Heart left ventricle (tissue), 16 donors: ENCODE measurements at regions of chr12 and their contacts with region 1.

Region 1: DNA sequence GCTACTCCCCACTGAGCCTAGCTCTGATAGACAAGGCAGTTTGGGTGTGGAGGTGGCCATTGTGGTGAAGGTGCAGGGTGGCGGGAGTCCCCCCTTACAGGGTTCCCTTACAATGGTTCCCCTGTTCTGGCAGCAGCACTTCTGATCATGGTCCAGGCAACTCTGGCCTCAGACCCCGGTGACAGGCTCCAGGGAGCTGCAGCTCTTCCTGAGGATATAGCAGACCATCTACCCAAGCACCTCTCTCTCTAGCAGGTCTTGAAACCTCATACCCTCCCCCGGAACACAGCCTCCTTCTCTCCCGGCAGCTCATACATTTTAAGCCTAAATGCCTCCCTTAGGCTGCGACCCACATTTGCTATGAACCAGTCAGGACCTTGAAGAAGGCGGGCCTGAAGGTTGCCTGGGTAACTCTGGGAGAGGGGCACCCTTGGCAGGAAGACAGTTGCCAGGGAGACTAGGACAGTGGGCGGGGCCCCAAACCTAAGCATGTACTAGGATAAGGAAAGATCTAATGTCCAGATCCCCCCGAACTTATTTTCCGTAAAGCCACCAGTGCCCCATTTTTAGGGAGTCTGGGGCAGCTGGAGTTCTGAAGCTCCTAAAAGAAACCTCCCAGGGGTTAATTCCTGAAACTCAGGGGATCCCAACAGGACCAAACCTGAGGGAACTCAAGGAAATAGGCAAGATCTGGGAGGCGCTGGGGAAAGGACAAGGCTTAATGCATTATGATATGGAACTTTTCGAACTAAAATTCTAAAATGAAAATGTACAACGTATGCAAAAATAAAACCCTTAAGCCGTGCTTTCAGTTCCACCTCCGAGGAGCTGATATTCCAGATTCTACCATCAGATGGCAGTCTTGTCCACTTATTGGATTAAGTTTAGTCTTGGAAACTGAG is 4.5 kb upstream of the GDF11 start:
- DNase-seq: peak; percentile 77 to 88 (median 82)
- ATAC-seq: peak; percentile 70 to 74 (median 72)
- H3K4me3 ChIP-seq: peak overlapping the region in 11 of 12 donors; percentile 37 to 68 (median 57)
- H3K27ac ChIP-seq: peak overlapping the region in 11 of 12 donors; percentile 38 to 79 (median 63)
- H3K4me1 ChIP-seq: peaks cover 0 to 27% (median 16%) of the 10 kb centered on the region in 12 donors
- H3K27me3 ChIP-seq: no peaks in the 10 kb centered on the region
- CTCF ChIP-seq: peak; percentile 78 to 91 (median 86)
- POLR2A ChIP-seq: no peak

Region 2: DNA sequence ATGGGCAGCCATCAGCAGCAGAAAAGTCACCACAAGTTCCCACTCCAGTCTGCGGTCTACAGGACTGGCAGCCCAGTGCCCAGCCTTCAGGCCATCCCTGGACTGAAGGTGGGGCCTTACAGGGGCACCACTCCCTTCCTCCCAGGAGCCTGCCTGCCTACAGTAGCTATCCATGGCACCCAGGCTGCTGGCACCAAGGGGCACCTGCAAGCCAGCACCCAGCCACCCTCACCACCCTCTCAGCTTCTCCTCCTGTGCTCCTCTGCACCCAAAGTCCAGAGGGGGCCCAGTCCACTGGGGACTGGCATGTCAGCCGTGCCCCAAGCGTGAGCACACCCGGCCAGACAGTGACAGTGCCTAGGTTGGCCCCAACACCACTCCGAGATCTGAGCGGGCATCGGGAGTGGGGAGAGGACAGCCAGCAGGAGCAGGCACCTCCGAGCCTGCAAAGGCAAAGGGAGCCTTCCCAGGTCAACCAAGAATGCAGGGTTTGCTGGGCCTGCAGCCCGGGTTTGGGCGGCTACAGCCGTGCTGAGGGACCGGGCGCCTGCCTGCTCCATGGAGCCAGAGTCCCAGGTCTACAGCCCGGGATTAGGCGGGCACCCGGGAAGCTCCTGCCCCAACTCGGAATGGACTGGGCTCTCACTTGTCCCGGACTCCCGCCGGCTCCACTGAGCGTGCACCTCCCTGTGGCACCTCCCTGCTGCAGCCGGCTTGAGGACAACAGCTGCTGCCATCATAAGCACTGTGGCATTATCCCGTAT is 346.2 kb before region 1 on chr12:
- intact Hi-C with region 1: no loop called
- DNase-seq: no peak
- ATAC-seq: no peak
- H3K4me3 ChIP-seq: no peak overlapping the region
- H3K27ac ChIP-seq: no peak overlapping the region
- H3K4me1 ChIP-seq: no peaks in the 10 kb centered on the region
- H3K27me3 ChIP-seq: peaks cover 0 to 6% (median 0%) of the 10 kb centered on the region in 9 donors
- CTCF ChIP-seq: no peak
- POLR2A ChIP-seq: no peak

Region 3: DNA sequence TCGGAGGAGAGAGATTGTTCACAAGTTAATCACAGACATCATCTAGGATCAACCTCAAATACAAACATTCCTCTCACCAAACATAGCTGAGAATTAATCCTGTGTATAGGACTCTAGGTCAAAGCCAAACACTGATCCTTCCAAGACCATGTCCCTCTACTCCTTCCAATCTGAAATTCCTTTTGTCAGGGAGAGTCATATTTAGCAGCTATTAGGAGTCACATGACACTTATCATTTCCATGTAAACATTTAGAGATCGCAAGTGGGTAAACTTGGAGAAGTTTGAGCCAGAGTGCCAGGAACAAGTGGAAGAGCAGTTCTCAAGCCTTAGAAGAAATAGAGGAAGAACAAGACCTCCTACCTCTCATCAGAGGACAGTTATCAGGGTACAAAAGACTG is 152.6 kb before region 1 on chr12:
- intact Hi-C with region 1: no loop called
- DNase-seq: no peak
- ATAC-seq: no peak
- H3K4me3 ChIP-seq: no peak overlapping the region
- H3K27ac ChIP-seq: no peak overlapping the region
- H3K4me1 ChIP-seq: no peaks in the 10 kb centered on the region
- H3K27me3 ChIP-seq: no peaks in the 10 kb centered on the region
- CTCF ChIP-seq: no peak
- POLR2A ChIP-seq: no peak

Region 4: DNA sequence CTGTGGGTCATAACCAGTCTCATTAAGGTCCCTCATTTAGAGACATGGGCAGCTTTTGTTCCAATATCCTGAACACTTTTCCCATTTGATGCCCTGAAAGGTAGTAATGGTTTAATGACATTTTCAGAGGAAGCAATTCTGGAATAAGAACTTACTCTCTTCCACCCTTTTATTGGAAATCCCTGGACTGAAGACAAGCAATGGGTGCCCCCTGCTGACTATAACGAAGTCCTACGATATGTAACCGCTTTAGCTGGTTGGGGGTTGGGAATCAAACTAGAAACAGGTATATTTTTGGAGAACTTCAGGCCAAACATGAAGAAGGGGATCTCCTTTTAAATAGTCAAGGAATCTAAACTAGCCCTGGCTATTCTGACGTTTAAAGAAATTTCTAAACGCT is 58.7 kb after region 1 on chr12:
- intact Hi-C with region 1: loop called in 9 of 10 experiments (anchors 2 to 5 kb)
- DNase-seq: peak in 1 of 5 donors; percentile 18
- ATAC-seq: peak in 2 of 4 donors; percentile 52 to 60
- H3K4me3 ChIP-seq: no peak overlapping the region
- H3K27ac ChIP-seq: no peak overlapping the region
- H3K4me1 ChIP-seq: peaks cover 0 to 7% (median 0%) of the 10 kb centered on the region in 12 donors
- H3K27me3 ChIP-seq: no peaks in the 10 kb centered on the region
- CTCF ChIP-seq: peak in 11 of 12 donors; percentile 29 to 65 (median 47)
- POLR2A ChIP-seq: no peak

Region 5: DNA sequence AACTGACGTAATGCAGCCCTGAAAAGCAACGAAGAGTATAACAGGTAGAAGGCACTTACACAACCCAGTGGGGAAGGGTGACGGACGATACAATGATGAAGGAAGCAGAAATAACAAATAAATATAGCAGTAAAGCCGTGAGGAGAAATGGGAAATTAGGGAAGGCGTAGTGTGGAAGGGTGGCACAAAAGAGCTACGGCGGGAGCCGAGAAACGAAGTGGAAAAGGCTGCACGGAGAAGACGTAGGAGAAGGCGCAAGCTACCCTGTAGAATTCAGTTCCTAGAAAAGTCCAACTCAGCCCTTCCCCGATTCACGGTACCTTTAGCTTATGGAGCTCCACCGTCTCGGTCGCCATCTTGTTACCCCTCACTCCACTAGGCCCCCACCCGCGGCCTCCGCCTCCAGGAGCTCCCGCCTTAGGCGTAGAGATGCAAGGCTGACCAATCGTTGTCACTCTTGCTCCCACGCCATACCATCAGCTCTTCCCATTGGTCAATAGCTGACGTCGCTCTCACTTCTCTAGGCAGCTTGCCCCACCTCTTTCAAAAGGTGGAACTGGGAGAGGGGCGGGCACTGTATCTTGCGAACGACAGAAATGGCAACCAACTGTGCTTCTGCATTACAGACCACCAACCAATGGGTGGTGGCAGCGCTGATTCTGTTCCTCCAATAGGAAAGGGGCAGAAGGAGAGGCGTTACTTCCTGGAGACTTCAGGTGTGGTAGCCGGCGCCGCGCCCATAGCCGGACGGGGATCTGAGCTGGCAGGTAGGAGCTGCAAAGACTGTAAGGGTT is 79.2 kb after region 1 on chr12 and contains the starts of genes ORMDL2 and SARNP:
- intact Hi-C with region 1: loop called in 3 of 10 experiments (anchors 5 kb)
- DNase-seq: peak; percentile 96 to 98 (median 98)
- ATAC-seq: peak; percentile 98 to 99 (median 99)
- H3K4me3 ChIP-seq: peak within 1 kb of the TSS; percentile 59 to 95 (median 74)
- H3K27ac ChIP-seq: peak within 1 kb of the TSS; percentile 62 to 92 (median 84)
- H3K4me1 ChIP-seq: peaks cover 4 to 43% (median 30%) of the 10 kb centered on the region in 12 donors
- H3K27me3 ChIP-seq: no peaks in the 10 kb centered on the region
- CTCF ChIP-seq: no peak
- POLR2A ChIP-seq: peak in 1 of 2 donors; percentile 47
- total RNA-seq, gene ORMDL2: 9.6 to 42.3 (median 22.2) TPM
- total RNA-seq, gene SARNP: 47.2 to 69.3 (median 54.0) TPM

Region 6: DNA sequence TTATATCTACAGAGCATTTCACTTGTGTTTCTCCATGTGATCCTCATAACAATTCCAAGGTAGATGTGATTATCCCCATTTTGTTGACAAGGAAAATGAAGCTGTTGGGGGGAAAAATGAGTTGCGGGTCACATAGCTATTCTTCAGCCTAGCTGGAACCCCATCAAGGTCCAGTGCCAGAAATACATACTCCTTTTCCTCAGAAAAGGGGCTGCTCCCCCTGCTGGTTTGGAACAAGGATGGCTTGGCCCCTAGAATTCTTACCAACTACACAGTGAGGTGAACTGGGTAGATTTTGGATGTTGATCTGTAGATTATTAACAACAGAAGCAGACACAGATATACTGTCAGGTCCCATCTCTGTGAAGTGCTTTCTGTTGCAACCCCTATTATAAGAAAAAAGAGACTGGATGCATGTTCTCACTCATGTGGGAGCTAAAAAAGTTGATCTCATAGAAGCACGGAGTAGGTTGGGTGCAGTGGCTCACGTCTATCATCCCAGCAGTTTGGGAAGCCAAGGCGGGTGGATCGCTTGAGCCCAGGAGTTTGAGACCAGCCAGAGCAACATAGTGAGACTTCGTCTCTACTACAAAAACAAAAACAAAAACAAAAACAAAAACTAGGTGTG is 291.4 kb after region 1 on chr12:
- intact Hi-C with region 1: loop called in 3 of 10 experiments (anchors 10 kb)
- DNase-seq: peak in 1 of 5 donors; percentile 36
- ATAC-seq: peak in 1 of 4 donors; percentile 58
- H3K4me3 ChIP-seq: no peak overlapping the region
- H3K27ac ChIP-seq: no peak overlapping the region
- H3K4me1 ChIP-seq: peaks cover 0 to 2% (median 0%) of the 10 kb centered on the region in 12 donors
- H3K27me3 ChIP-seq: no peaks in the 10 kb centered on the region
- CTCF ChIP-seq: peak; percentile 34 to 66 (median 53)
- POLR2A ChIP-seq: no peak

Region 7: DNA sequence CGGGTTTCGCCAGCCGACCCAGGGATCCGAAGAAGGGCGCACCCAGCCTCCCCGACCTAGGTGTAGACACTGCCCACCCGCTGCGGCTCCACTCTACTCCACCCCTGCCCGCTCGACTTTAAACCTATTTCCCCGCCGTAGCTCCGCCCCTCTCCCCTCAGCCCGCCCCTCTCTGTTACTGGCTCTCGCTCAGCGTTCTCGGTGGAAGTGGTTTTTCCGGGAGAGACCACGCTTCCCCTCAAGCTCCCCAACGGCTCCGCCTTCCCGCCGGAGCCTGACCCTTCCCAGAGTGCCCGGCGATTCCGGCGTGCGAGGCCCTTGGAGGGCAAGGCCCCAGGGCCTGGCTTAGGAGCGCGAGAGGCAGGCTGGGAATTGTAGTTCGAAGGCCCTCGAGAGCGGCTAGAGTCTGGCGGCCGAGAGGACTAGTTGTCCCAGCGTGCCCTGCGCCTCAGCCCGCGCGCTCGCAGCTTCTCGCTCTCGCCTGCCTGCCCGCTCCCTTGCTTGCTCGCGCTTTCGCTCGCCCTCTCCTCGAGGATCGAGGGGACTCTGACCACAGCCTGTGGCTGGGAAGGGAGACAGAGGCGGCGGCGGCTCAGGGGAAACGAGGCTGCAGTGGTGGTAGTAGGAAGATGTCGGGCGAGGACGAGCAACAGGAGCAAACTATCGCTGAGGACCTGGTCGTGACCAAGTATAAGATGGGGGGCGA is 365.9 kb after region 1 on chr12 and contains the start of gene PA2G4:
- intact Hi-C with region 1: loop called in 1 of 10 experiments (anchors 10 kb)
- DNase-seq: peak; percentile 98 to 99 (median 99)
- ATAC-seq: peak; percentile 98 to 99 (median 99)
- H3K4me3 ChIP-seq: peak within 1 kb of the TSS; percentile 45 to 93 (median 84)
- H3K27ac ChIP-seq: peak within 1 kb of the TSS; percentile 6 to 92 (median 84)
- H3K4me1 ChIP-seq: peaks cover 0 to 37% (median 22%) of the 10 kb centered on the region in 12 donors
- H3K27me3 ChIP-seq: no peaks in the 10 kb centered on the region
- CTCF ChIP-seq: peak in 1 of 12 donors; percentile 7
- POLR2A ChIP-seq: peak; percentile 55 to 93
- total RNA-seq, gene PA2G4: 66.0 to 105 (median 72.4) TPM

Region 8: GRCh38 chr12:56565510-56566101 is 827.2 kb after region 1 on chr12:
- intact Hi-C with region 1: no loop called
- DNase-seq: peak; percentile 80 to 91 (median 91)
- ATAC-seq: peak; percentile 91 to 97 (median 95)
- H3K4me3 ChIP-seq: peak overlapping the region in 4 of 12 donors; percentile 4 to 21 (median 9)
- H3K27ac ChIP-seq: peak overlapping the region; percentile 49 to 93 (median 84)
- H3K4me1 ChIP-seq: peaks cover 4 to 59% (median 38%) of the 10 kb centered on the region in 12 donors
- H3K27me3 ChIP-seq: no peaks in the 10 kb centered on the region
- CTCF ChIP-seq: peak in 6 of 12 donors; percentile 9 to 31 (median 18)
- POLR2A ChIP-seq: peak in 1 of 2 donors; percentile 39